ENCODE measurements at regions of chr11 and their contacts with region 1.

Region 1: GRCh38 chr11:22787551-22788162 is 41.9 kb downstream of the SVIP start:
- DNase-seq: peak in 3 of 5 donors; percentile 29 to 83 (median 71)
- H3K4me3 ChIP-seq: no peak overlapping the region
- H3K27ac ChIP-seq: no peak overlapping the region
- H3K4me1 ChIP-seq: no peaks in the 10 kb centered on the region
- H3K27me3 ChIP-seq: no peaks in the 10 kb centered on the region
- CTCF ChIP-seq: peak; percentile 55

Region 2: DNA sequence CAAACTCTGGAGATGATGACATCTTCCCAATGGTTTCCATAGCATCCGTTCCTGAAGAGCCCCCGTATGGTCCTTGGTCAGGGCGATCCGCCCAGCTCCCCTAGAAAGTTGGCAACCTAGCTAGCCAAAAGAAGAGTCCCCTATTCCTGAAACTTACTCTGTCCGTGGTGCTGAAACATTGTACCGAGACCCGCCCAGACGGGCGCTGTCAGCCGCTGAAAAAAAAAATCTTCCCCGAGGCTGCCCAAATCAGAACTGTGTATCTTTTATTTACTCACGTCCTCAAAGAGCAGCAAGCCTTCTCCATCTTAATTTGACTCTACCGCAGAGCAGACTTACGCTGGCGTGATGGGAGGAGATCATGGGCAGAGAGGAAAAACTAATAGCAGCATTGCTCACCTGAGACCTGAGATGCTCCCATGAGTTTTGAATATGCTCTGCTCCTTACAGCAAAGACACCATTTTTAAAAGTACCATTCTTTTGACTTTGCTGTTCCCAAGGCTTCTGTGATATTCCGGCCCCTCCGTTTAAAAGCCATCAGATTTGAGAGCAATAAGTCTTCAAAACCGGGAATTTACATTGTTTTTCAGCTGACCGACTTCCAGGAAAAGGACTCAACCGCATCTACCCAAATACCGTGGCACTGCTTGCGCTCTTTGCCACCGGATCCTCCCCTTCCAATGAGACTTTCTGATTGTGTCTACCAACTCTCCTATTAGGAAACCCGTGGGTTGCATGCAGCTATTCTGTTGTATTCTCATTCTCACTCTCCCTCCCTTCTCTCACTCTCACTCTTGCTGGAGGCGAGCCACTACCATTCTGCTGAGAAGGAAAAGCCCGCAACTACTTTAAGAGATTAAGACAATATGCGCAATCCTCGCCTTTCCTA is 449.8 kb before region 1 on chr11 and contains the start of gene SLC17A6:
- intact Hi-C with region 1: loop called (anchors 10 kb)
- DNase-seq: peak in 4 of 5 donors; percentile 49 to 85 (median 74)
- H3K4me3 ChIP-seq: no peak within 1 kb of the TSS
- H3K27ac ChIP-seq: no peak within 1 kb of the TSS
- H3K4me1 ChIP-seq: no peaks in the 10 kb centered on the region
- H3K27me3 ChIP-seq: peaks cover 35% of the 10 kb centered on the region
- CTCF ChIP-seq: no peak
- total RNA-seq, gene SLC17A6: not detected